CD4-positive, alpha-beta memory T cell (primary cell): ENCODE measurements at regions of chr6 and their contacts with region 1.

Region 1: GRCh38 chr6:157314705-157315321 is 8.5 kb downstream of the TMEM242 start:
- DNase-seq: peak; percentile 39 to 62 (median 58)
- H3K4me3 ChIP-seq: no peak overlapping the region
- H3K4me3 Mint-ChIP-seq: no peak overlapping the region
- H3K27ac ChIP-seq: no peak overlapping the region
- H3K27ac Mint-ChIP-seq: peak overlapping the region in 4 of 7 donors; percentile 14 to 41 (median 22)
- H3K4me1 ChIP-seq: peaks cover 10% of the 10 kb centered on the region
- H3K4me1 Mint-ChIP-seq: peaks cover 0 to 7% (median 6%) of the 10 kb centered on the region in 4 donors
- H3K27me3 ChIP-seq: no peaks in the 10 kb centered on the region
- H3K27me3 Mint-ChIP-seq: no peaks in the 10 kb centered on the region

Region 2: DNA sequence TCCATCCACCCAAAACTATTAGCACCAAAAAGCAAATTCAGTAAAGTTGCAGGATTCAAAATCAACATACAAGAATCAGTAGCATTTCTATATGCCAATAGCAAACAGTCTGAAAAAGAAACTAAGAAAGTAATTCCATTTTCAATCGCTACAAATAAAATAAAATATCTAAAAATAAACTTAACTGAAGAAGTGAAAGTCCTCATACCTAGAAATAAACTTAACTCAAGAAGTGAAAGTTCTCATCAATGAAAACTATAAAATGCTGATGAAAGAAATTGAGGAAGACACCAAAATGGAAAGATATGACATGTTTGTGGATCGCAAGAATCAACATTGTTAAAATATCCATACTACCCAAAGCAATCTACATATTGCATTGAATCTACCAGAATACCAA is 640.6 kb before region 1 on chr6:
- CTCF ChIA-PET with region 1: no interaction called
- POLR2A ChIA-PET with region 1: no interaction called
- intact Hi-C with region 1: no loop called
- DNase-seq: no peak
- H3K4me3 ChIP-seq: no peak overlapping the region
- H3K4me3 Mint-ChIP-seq: no peak overlapping the region
- H3K27ac ChIP-seq: no peak overlapping the region
- H3K27ac Mint-ChIP-seq: no peak overlapping the region
- H3K4me1 ChIP-seq: no peaks in the 10 kb centered on the region
- H3K4me1 Mint-ChIP-seq: no peaks in the 10 kb centered on the region
- H3K27me3 ChIP-seq: no peaks in the 10 kb centered on the region
- H3K27me3 Mint-ChIP-seq: peaks cover 1 to 10% of the 10 kb centered on the region in 2 donors

Region 3: GRCh38 chr6:156710479-156710878 is 604.3 kb before region 1 on chr6:
- CTCF ChIA-PET with region 1: no interaction called
- POLR2A ChIA-PET with region 1: no interaction called
- intact Hi-C with region 1: no loop called
- DNase-seq: no peak
- H3K4me3 ChIP-seq: no peak overlapping the region
- H3K4me3 Mint-ChIP-seq: no peak overlapping the region
- H3K27ac ChIP-seq: no peak overlapping the region
- H3K27ac Mint-ChIP-seq: no peak overlapping the region
- H3K4me1 ChIP-seq: no peaks in the 10 kb centered on the region
- H3K4me1 Mint-ChIP-seq: peaks cover 0 to 1% (median 0%) of the 10 kb centered on the region in 4 donors
- H3K27me3 ChIP-seq: no peaks in the 10 kb centered on the region
- H3K27me3 Mint-ChIP-seq: peaks cover 7 to 13% of the 10 kb centered on the region in 2 donors

Region 4: DNA sequence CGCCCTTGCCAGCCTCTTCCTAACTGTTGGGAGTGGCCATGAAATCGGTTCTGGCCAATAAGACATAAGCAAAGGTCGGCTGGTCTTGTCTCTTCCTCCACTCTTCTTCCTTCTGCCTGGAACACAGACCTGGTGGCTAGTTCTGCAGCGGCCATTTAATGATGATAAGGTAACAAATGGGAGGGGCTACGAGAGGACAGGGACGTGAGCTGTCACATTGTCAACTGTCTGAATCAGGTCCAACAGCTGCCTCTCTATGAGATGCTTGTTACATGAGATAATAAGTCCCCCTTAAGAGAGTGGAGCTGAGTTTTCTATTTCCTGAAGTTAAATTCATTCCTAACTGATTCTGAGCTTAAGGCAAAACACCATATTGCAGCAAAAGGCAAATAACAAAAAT is 21.0 kb after region 1 on chr6:
- CTCF ChIA-PET with region 1: interaction called, 17 read pairs
- POLR2A ChIA-PET with region 1: no interaction called
- intact Hi-C with region 1: loop called (anchors 1 kb)
- DNase-seq: no peak
- H3K4me3 ChIP-seq: no peak overlapping the region
- H3K4me3 Mint-ChIP-seq: no peak overlapping the region
- H3K27ac ChIP-seq: no peak overlapping the region
- H3K27ac Mint-ChIP-seq: no peak overlapping the region
- H3K4me1 ChIP-seq: no peaks in the 10 kb centered on the region
- H3K4me1 Mint-ChIP-seq: peaks cover 0 to 1% (median 0%) of the 10 kb centered on the region in 4 donors
- H3K27me3 ChIP-seq: no peaks in the 10 kb centered on the region
- H3K27me3 Mint-ChIP-seq: peaks cover 26 to 39% of the 10 kb centered on the region in 2 donors

Region 5: GRCh38 chr6:157597446-157598312 is 282.9 kb after region 1 on chr6:
- CTCF ChIA-PET with region 1: interaction called, 10 read pairs
- POLR2A ChIA-PET with region 1: no interaction called
- intact Hi-C with region 1: no loop called
- DNase-seq: peak in 4 of 5 donors; percentile 16 to 24 (median 18)
- H3K4me3 ChIP-seq: no peak overlapping the region
- H3K4me3 Mint-ChIP-seq: no peak overlapping the region
- H3K27ac ChIP-seq: no peak overlapping the region
- H3K27ac Mint-ChIP-seq: no peak overlapping the region
- H3K4me1 ChIP-seq: no peaks in the 10 kb centered on the region
- H3K4me1 Mint-ChIP-seq: peaks cover 0 to 3% (median under 1%) of the 10 kb centered on the region in 4 donors
- H3K27me3 ChIP-seq: no peaks in the 10 kb centered on the region
- H3K27me3 Mint-ChIP-seq: no peaks in the 10 kb centered on the region

Region 6: GRCh38 chr6:157614026-157614568 is 299.3 kb after region 1 on chr6:
- CTCF ChIA-PET with region 1: interaction called, 14 read pairs
- POLR2A ChIA-PET with region 1: no interaction called
- intact Hi-C with region 1: no loop called
- DNase-seq: no peak
- H3K4me3 ChIP-seq: no peak overlapping the region
- H3K4me3 Mint-ChIP-seq: no peak overlapping the region
- H3K27ac ChIP-seq: no peak overlapping the region
- H3K27ac Mint-ChIP-seq: no peak overlapping the region
- H3K4me1 ChIP-seq: no peaks in the 10 kb centered on the region
- H3K4me1 Mint-ChIP-seq: no peaks in the 10 kb centered on the region
- H3K27me3 ChIP-seq: no peaks in the 10 kb centered on the region
- H3K27me3 Mint-ChIP-seq: no peaks in the 10 kb centered on the region

Region 7: DNA sequence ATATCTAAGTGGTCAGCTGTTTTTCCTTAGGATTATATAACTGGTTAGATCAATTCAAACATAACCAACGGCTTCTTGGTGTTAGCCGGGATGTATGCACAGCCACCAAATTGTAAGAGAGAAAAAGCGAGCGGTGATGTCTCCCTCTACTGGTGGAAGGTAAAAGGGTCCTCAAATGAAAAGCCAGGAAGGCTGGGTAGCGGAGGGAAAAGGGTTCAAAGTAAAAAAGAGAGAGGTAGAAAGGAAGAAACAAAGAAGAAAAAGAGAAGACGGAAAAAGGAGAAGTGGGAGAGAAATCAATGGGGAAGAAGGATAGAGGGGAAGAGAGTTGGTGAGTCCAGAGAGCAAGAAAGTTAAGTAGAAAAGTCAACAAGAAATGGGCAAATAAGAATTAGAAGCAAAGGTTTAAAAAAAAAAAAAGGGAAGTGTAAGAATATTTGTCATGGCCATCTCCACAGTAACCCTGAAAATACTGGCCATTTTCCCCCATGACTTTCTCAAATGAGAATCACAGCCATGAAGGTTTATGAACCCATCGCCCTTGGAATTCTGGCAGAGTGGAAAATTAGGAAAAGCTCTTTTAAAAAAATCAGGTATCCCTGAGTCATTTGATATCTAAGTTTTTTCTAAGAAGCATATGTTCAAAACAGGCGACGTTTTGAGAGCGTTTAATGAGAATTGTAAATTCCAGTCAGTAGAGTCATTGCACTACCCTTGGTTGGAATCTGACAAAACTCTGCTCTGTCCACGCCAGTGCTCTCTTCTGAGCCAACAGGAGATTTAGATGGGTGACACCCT is 352.6 kb after region 1 on chr6:
- CTCF ChIA-PET with region 1: interaction called, 102 read pairs
- POLR2A ChIA-PET with region 1: no interaction called
- intact Hi-C with region 1: loop called (anchors 1 kb)
- DNase-seq: peak in 4 of 5 donors; percentile 45 to 61 (median 51)
- H3K4me3 ChIP-seq: no peak overlapping the region
- H3K4me3 Mint-ChIP-seq: peak overlapping the region in 1 of 8 donors; percentile 16
- H3K27ac ChIP-seq: no peak overlapping the region
- H3K27ac Mint-ChIP-seq: peak overlapping the region in 3 of 7 donors; percentile 5 to 75 (median 53)
- H3K4me1 ChIP-seq: no peaks in the 10 kb centered on the region
- H3K4me1 Mint-ChIP-seq: peaks cover 3 to 5% (median 5%) of the 10 kb centered on the region in 4 donors
- H3K27me3 ChIP-seq: no peaks in the 10 kb centered on the region
- H3K27me3 Mint-ChIP-seq: peaks cover 2 to 4% of the 10 kb centered on the region in 2 donors

Region 8: DNA sequence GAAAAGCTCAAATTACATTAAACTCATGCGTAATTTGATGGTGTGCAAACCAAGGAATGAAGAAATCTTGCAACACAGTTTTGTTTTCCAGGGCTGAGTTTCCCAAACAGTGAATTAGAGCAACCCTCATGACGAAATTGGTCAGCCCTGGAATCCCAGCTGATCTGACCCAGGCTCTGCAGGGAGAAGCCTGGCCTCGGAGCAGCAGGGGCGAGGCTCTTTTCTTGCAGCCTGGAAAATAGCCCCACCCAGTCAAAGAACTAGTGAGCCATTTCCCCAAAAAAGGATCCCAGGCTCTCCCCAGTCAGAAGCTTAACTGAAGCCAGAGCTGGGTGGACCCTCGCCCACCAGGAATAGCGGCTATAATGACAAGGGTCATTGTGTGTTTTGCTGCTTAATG is 401.0 kb after region 1 on chr6:
- CTCF ChIA-PET with region 1: no interaction called
- POLR2A ChIA-PET with region 1: no interaction called
- intact Hi-C with region 1: no loop called
- DNase-seq: no peak
- H3K4me3 ChIP-seq: no peak overlapping the region
- H3K4me3 Mint-ChIP-seq: no peak overlapping the region
- H3K27ac ChIP-seq: no peak overlapping the region
- H3K27ac Mint-ChIP-seq: no peak overlapping the region
- H3K4me1 ChIP-seq: no peaks in the 10 kb centered on the region
- H3K4me1 Mint-ChIP-seq: no peaks in the 10 kb centered on the region
- H3K27me3 ChIP-seq: no peaks in the 10 kb centered on the region
- H3K27me3 Mint-ChIP-seq: peaks cover 0 to 7% of the 10 kb centered on the region in 2 donors